ENCODE measurements at regions of chr6 and their contacts with region 1.

Region 1: GRCh38 chr6:113858480-113859348 is 1.6 kb downstream of the MARCKS start:
- DNase-seq: peak; percentile 90
- ATAC-seq: peak; percentile 81
- H3K4me3 Mint-ChIP-seq: peak overlapping the region; percentile 75
- H3K27ac Mint-ChIP-seq: peak overlapping the region; percentile 98
- H3K4me1 Mint-ChIP-seq: peaks cover 20% of the 10 kb centered on the region
- H3K27me3 Mint-ChIP-seq: peaks cover 10% of the 10 kb centered on the region
- CTCF ChIP-seq: peak; percentile 98

Region 2: DNA sequence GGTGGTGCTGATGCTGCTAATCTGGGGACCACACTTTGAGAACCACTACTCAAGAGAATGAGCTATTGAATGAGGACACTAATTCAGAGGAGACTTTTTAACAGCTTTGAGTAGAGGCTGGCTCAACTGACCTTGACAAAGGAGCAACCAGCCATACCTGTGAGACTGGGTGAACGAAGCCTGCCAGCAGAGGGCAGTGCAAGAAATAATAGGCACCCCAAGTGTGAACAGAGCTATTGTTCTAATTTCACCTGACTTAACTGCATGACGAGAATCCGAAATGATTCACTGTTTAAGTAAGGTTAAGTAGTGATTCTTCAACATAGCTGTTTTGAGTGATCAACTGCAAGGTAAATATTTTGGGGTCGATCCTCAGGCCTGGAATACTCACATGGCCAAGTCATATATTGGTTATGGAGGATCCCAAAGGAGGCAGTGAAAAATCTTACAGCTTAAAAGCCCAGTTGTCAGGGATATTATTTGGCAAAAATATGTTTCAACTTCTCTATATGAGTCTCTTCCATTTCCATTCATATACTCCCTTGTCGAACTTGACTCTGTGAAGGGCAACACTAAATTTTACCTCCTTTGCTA is 552.1 kb before region 1 on chr6:
- CTCF ChIA-PET with region 1: interaction called, 18 read pairs
- POLR2A ChIA-PET with region 1: no interaction called
- DNase-seq: peak; percentile 54
- ATAC-seq: peak; percentile 85
- H3K4me3 Mint-ChIP-seq: no peak overlapping the region
- H3K27ac Mint-ChIP-seq: no peak overlapping the region
- H3K4me1 Mint-ChIP-seq: no peaks in the 10 kb centered on the region
- H3K27me3 Mint-ChIP-seq: no peaks in the 10 kb centered on the region
- CTCF ChIP-seq: peak; percentile 41

Region 3: GRCh38 chr6:113461153-113461932 is 397.4 kb before region 1 on chr6:
- CTCF ChIA-PET with region 1: interaction called, 10 read pairs
- POLR2A ChIA-PET with region 1: no interaction called
- DNase-seq: no peak
- ATAC-seq: peak; percentile 48; the same call in 1 of the 2 replicates
- H3K4me3 Mint-ChIP-seq: no peak overlapping the region
- H3K27ac Mint-ChIP-seq: no peak overlapping the region
- H3K4me1 Mint-ChIP-seq: peaks cover 4% of the 10 kb centered on the region
- H3K27me3 Mint-ChIP-seq: no peaks in the 10 kb centered on the region
- CTCF ChIP-seq: no peak

Region 4: DNA sequence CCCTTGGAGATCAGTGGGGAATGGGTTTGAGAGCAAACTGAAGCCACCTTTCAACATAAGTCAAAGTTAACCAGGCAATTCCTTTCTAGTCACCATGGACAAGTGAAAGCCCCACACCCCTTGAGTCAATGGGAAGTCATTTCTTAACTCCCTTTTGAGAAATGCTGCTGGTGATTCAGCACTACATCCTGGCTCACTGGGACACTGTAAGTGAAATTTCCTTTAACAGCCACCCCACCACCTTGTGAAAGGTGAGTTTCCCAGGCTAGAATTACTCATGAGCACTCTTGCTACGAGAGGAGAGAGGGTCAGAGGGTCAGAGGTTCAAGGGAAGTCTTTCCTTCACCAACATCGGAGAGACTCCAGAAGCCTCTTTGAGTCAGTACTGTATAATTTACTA is 94.8 kb before region 1 on chr6:
- CTCF ChIA-PET with region 1: no interaction called
- POLR2A ChIA-PET with region 1: no interaction called
- DNase-seq: no peak
- ATAC-seq: no peak
- H3K4me3 Mint-ChIP-seq: no peak overlapping the region
- H3K27ac Mint-ChIP-seq: peak overlapping the region; percentile 82; the same call in 1 of the 2 replicates
- H3K4me1 Mint-ChIP-seq: peaks cover 15% of the 10 kb centered on the region
- H3K27me3 Mint-ChIP-seq: peaks cover 3% of the 10 kb centered on the region
- CTCF ChIP-seq: no peak

Region 5: DNA sequence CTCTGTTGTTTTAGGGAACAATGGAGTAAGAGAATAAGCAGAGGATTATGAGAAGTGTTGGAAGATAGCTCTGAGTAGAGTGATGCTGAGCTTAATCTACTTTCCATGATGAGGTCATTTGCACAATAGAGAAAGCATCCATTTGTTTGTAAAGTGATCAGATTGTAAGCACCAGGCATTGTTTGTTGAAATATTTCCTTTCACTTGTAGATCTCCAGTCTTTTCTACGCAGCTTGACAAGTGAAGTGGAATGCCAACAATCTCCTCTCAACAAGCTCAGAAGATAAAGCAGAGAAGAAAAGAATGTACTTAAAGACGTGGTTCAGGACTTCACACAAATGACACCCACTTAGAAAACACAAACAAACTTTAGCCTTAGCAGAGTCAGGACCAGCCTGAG is 81.7 kb before region 1 on chr6:
- CTCF ChIA-PET with region 1: interaction called, 19 read pairs
- POLR2A ChIA-PET with region 1: interaction called, 12 read pairs
- DNase-seq: no peak
- ATAC-seq: peak; percentile 81
- H3K4me3 Mint-ChIP-seq: no peak overlapping the region
- H3K27ac Mint-ChIP-seq: peak overlapping the region; percentile 12
- H3K4me1 Mint-ChIP-seq: peaks cover 22% of the 10 kb centered on the region
- H3K27me3 Mint-ChIP-seq: peaks cover 91% of the 10 kb centered on the region
- CTCF ChIP-seq: no peak

Region 6: DNA sequence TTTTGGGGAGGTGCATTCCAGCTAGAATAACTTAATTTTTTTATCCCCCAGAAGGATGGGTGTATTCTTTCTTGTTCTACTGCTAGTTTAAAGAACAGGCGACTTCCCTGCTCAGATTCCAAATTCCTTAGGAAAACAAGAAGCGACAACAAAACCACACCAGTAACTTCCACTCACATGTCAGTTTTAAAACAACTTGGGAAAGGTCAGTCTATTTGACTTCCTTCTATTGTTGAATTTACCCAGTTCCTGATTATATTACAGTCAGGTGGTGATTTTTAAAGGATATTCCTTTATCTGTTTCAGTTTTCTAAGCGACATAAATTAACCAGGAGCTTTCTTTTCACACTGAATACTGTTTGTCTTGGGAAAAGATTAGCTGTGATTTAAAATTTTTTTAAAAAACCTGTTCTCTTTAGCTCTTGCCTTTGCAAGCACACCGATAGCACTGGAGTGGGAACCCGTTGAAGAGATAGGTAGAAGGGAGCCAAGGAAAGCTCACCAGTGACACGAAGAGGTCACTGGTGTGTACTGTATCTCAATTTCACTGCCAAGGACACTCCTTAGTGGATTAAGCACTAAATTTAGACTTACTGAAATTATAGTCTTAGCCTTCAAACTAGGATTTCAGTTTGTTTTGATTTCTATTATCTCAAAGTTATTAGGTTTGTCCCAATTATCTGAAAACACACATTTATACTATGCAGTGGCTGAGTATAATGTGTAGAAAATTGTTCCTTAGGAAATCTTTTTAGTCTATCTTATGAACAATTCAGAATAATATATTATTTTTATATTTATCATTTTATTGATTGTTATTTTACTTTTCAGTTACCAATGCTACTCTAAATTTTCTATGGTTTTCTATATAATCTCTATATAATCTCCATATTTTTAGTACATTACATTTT is 20.7 kb after region 1 on chr6:
- CTCF ChIA-PET with region 1: interaction called, 28 read pairs
- POLR2A ChIA-PET with region 1: interaction called, 4 read pairs
- DNase-seq: peak; percentile 33
- ATAC-seq: peak; percentile 100
- H3K4me3 Mint-ChIP-seq: no peak overlapping the region
- H3K27ac Mint-ChIP-seq: no peak overlapping the region
- H3K4me1 Mint-ChIP-seq: 0 out of 2 replicates have a peak, but pooled peaks cover 4% of the 10 kb centered on the region
- H3K27me3 Mint-ChIP-seq: no peaks in the 10 kb centered on the region
- CTCF ChIP-seq: peak; percentile 22; the same call in 1 of the 2 replicates

Region 7: DNA sequence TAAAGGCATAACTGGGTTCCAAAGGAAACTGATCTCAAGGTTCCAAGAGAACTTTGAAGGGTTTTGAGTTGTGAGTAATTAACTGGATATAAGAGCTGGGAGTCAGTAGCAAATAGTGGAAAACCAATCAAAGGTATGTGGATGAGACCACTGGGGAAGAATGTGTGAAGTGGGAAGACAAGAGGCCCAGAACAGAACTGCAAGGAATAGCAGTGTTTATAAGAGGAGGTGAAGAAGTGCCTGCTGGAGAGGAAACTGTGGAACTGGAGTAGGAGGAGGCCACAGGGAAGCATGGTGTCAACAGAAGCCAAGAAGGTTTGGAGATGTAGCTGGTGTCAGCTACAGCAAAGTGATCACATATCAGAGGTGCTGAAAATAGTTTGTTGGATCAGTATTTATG is 131.0 kb after region 1 on chr6:
- CTCF ChIA-PET with region 1: no interaction called
- POLR2A ChIA-PET with region 1: no interaction called
- DNase-seq: no peak
- ATAC-seq: no peak
- H3K4me3 Mint-ChIP-seq: no peak overlapping the region
- H3K27ac Mint-ChIP-seq: no peak overlapping the region
- H3K4me1 Mint-ChIP-seq: peaks cover 1% of the 10 kb centered on the region
- H3K27me3 Mint-ChIP-seq: no peaks in the 10 kb centered on the region
- CTCF ChIP-seq: no peak

Region 8: DNA sequence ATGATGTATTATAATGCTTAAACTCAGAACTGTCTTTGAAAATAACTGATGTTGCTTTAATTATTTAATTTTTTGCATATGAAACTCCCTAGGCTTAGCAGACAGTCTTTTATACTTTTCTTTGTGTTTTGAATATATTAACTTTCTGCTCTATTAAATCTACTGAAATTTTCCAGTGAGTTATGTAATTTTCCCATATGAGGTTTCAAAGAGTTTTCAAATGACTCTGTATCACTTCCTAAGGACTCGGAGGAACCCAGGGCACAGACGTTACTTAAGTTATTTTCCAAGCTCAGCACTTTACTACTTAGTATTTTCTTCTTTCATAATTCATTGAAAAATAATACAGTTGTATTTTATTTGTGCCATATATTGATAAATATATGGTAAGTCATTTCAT is 361.5 kb after region 1 on chr6:
- CTCF ChIA-PET with region 1: no interaction called
- POLR2A ChIA-PET with region 1: no interaction called
- DNase-seq: no peak
- ATAC-seq: no peak
- H3K4me3 Mint-ChIP-seq: no peak overlapping the region
- H3K27ac Mint-ChIP-seq: no peak overlapping the region
- H3K4me1 Mint-ChIP-seq: peaks cover 42% of the 10 kb centered on the region
- H3K27me3 Mint-ChIP-seq: no peaks in the 10 kb centered on the region
- CTCF ChIP-seq: no peak